ENCODE measurements at regions of chr5 and their contacts with region 1.

Region 1: DNA sequence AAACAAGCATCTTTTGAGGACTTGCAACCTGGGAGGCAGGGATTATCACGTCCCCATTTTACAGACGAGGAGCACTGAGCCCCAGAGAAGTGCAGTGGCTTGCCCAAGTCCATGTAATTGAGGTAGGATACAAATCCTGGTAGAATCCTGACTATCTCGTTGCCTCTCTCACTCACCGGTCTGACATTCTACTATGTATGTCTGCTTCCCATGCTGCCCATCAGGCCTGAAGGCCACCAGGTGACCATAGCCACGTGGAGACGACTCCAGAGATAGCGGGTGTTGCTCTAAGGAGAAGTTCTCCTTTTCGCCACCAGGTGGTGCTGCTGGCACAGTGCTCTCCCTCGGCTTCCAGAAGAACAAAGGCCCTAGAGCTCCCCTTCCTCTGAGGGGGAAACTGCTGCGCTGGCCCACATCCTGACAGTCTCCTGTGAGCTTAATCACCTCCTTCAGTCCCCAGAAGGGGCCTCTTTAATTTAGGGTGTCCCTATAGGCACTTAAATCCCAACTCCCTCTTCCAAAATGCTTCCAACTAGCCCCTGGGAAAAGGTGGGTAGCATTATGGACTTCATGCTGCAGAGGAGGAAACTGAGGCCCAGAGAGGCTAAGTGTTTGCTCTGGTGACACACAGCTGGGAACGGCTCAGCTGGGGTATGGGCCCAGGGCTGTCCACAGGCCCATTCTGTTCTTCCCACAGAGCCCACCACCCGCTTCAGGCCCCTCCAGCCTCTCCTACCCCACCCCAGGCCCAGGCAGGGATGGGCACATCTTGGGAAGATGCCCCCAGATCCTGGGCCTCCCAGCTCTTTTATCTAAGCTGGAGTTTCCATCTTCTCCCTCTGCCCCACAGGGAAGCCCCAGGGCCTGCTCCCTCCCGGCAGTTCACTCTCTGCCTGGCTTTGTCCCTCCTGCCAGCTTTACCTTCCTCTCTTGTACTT is 6.4 kb downstream of the SLC34A1 start:
- DNase-seq: peak; percentile 78 to 91 (median 84)
- ATAC-seq: peak; percentile 91
- H3K4me3 ChIP-seq: no peak overlapping the region
- H3K27ac ChIP-seq: peak overlapping the region; percentile 71 to 73
- H3K4me1 ChIP-seq: peaks cover 14 to 39% of the 10 kb centered on the region in 2 donors
- H3K27me3 ChIP-seq: peaks cover 0 to 18% of the 10 kb centered on the region in 2 donors
- CTCF ChIP-seq: peak; percentile 99

Region 2: GRCh38 chr5:177454397-177455035 is 63.9 kb after region 1 on chr5:
- intact Hi-C with region 1: loop called (anchors 5 to 10 kb)
- DNase-seq: peak; percentile 86 to 98 (median 92)
- ATAC-seq: peak; percentile 78
- H3K4me3 ChIP-seq: peak overlapping the region; percentile 43 to 64
- H3K27ac ChIP-seq: peak overlapping the region; percentile 72 to 80
- H3K4me1 ChIP-seq: peaks cover 8 to 46% of the 10 kb centered on the region in 2 donors
- H3K27me3 ChIP-seq: peaks cover 0 to 48% of the 10 kb centered on the region in 2 donors
- CTCF ChIP-seq: peak; percentile 87 to 98

Region 3: GRCh38 chr5:177500685-177501522 is 110.3 kb after region 1 on chr5:
- intact Hi-C with region 1: loop called in 1 of 2 experiments (anchors 5 kb)
- DNase-seq: peak; percentile 83 to 98 (median 90)
- ATAC-seq: peak; percentile 36
- H3K4me3 ChIP-seq: no peak overlapping the region
- H3K27ac ChIP-seq: no peak overlapping the region
- H3K4me1 ChIP-seq: peaks cover 13 to 47% of the 10 kb centered on the region in 2 donors
- H3K27me3 ChIP-seq: peaks cover 0 to 10% of the 10 kb centered on the region in 2 donors
- CTCF ChIP-seq: peak; percentile 93 to 99